CD4-positive, alpha-beta T cell (primary cell): ENCODE measurements at regions of chr5 and their contacts with region 1.

Region 1: GRCh38 chr5:119340597-119341218 is 15.1 kb upstream of the TNFAIP8 start:
- DNase-seq: peak in 12 of 14 experiments; percentile 44 to 91 (median 62)
- ATAC-seq: peak; percentile 55
- H3K4me3 ChIP-seq: peak overlapping the region; percentile 49
- H3K4me3 Mint-ChIP-seq: peak overlapping the region; percentile 81
- H3K27ac ChIP-seq: peak overlapping the region; percentile 77 to 83
- H3K27ac Mint-ChIP-seq: peak overlapping the region; percentile 97
- H3K4me1 ChIP-seq: peaks cover 93% of the 10 kb centered on the region
- H3K4me1 Mint-ChIP-seq: peaks cover 97% of the 10 kb centered on the region
- H3K27me3 ChIP-seq: no peaks in the 10 kb centered on the region
- H3K27me3 Mint-ChIP-seq: no peaks in the 10 kb centered on the region
- CTCF ChIP-seq: no peak

Region 2: DNA sequence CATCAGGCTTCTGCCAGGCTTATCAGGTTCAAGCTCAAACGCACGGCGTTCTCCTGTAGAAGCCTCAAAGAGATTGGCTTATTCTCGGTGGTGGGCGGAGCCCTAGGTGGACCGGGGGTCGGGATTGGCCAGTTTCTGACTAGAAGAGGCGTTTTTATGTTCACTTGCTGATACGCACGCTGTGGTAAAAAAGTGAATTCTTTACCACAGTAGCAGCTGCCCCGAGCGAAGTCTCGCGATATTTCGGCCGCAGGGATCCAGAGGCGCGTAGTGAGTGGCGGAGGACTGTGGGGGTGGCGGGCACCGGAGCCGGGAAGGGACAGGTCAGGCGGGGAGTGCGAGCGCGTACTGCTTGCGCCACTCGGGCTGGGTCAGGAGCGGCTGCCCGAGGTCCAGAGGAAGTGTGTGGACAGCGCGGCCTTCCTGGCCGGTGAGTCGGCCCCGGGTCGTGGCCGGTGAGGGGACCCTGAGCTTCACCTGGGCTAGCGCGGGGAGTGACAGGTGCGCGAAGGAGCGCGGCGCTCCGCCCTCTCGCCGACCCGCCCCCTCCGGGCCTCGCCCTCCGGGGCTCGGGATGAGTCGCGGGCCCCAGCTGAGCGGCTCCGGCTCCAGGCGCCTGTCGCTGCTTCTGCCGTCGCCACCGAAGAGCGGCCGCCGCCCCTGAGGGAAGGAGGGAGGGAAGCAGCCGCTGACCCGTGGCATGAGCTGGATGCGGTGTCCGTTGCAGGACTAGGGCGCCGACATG is 269.7 kb before region 1 on chr5 and contains the start of gene DMXL1:
- CTCF ChIA-PET with region 1: interaction called, 4 read pairs
- POLR2A ChIA-PET with region 1: interaction called, 8 read pairs
- intact Hi-C with region 1: loop called in 1 of 2 experiments (anchors 2 kb)
- DNase-seq: peak; percentile 96 to 99 (median 98)
- ATAC-seq: peak; percentile 82
- H3K4me3 ChIP-seq: peak within 1 kb of the TSS; percentile 81
- H3K4me3 Mint-ChIP-seq: peak within 1 kb of the TSS; percentile 100
- H3K27ac ChIP-seq: peak within 1 kb of the TSS; percentile 90 to 94
- H3K27ac Mint-ChIP-seq: peak within 1 kb of the TSS; percentile 98
- H3K4me1 ChIP-seq: peaks cover 19% of the 10 kb centered on the region
- H3K4me1 Mint-ChIP-seq: peaks cover 46% of the 10 kb centered on the region
- H3K27me3 ChIP-seq: no peaks in the 10 kb centered on the region
- H3K27me3 Mint-ChIP-seq: no peaks in the 10 kb centered on the region
- CTCF ChIP-seq: no peak
- total RNA-seq, gene DMXL1: 28.4 to 29.1 TPM

Region 3: GRCh38 chr5:119290161-119290569 is 50.5 kb before region 1 on chr5:
- CTCF ChIA-PET with region 1: interaction called, 8 read pairs
- POLR2A ChIA-PET with region 1: interaction called, 8 read pairs
- intact Hi-C with region 1: loop called in 1 of 2 experiments (anchors 2 kb)
- DNase-seq: peak in 4 of 14 experiments; percentile 23 to 69 (median 66)
- ATAC-seq: peak; percentile 28
- H3K4me3 ChIP-seq: peak overlapping the region; percentile 28
- H3K4me3 Mint-ChIP-seq: peak overlapping the region; percentile 76
- H3K27ac ChIP-seq: peak overlapping the region; percentile 68 to 89
- H3K27ac Mint-ChIP-seq: peak overlapping the region; percentile 97
- H3K4me1 ChIP-seq: peaks cover 42% of the 10 kb centered on the region
- H3K4me1 Mint-ChIP-seq: peaks cover 83% of the 10 kb centered on the region
- H3K27me3 ChIP-seq: no peaks in the 10 kb centered on the region
- H3K27me3 Mint-ChIP-seq: no peaks in the 10 kb centered on the region
- CTCF ChIP-seq: no peak

Region 4: DNA sequence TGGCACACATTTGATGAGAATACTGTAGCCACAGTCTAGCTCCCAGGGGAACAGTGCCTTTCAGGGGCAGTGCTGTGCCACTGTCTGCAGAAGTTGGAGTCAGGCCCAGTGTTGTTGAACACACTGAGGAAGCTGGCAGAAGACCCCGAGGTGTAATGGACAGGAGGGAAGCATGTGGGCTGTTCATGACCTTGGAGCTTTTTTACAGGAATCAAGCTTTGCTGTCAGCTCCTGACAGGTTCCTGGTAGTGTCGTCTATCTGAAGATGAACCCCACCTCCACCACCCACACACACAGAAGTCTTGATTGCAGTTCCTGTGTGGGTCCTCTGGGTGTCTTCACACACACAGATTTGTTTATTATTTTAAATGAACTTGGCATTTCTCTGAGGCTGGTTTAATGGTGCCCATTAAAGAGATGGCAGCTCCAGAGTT is 25.2 kb before region 1 on chr5:
- CTCF ChIA-PET with region 1: interaction called, 25 read pairs
- POLR2A ChIA-PET with region 1: interaction called, 31 read pairs
- intact Hi-C with region 1: no loop called
- DNase-seq: peak in 10 of 14 experiments; percentile 42 to 85 (median 54)
- ATAC-seq: peak; percentile 87
- H3K4me3 ChIP-seq: no peak overlapping the region
- H3K4me3 Mint-ChIP-seq: peak overlapping the region; percentile 59
- H3K27ac ChIP-seq: peak overlapping the region; percentile 43 to 61
- H3K27ac Mint-ChIP-seq: peak overlapping the region; percentile 95
- H3K4me1 ChIP-seq: peaks cover 80% of the 10 kb centered on the region
- H3K4me1 Mint-ChIP-seq: peaks cover 92% of the 10 kb centered on the region
- H3K27me3 ChIP-seq: no peaks in the 10 kb centered on the region
- H3K27me3 Mint-ChIP-seq: no peaks in the 10 kb centered on the region
- CTCF ChIP-seq: peak; percentile 65

Region 5: GRCh38 chr5:119355685-119356611 is 15.2 kb after region 1 on chr5 and contains the start of gene TNFAIP8:
- CTCF ChIA-PET with region 1: interaction called, 36 read pairs
- POLR2A ChIA-PET with region 1: interaction called, 301 read pairs
- intact Hi-C with region 1: loop called in 1 of 2 experiments (anchors 2 kb)
- DNase-seq: peak in 6 of 14 experiments; percentile 28 to 81 (median 58)
- ATAC-seq: peak; percentile 37
- H3K4me3 ChIP-seq: peak within 1 kb of the TSS; percentile 61
- H3K4me3 Mint-ChIP-seq: peak within 1 kb of the TSS; percentile 93
- H3K27ac ChIP-seq: peak within 1 kb of the TSS; percentile 63 to 76
- H3K27ac Mint-ChIP-seq: peak within 1 kb of the TSS; percentile 86
- H3K4me1 ChIP-seq: peaks cover 89% of the 10 kb centered on the region
- H3K4me1 Mint-ChIP-seq: peaks cover 97% of the 10 kb centered on the region
- H3K27me3 ChIP-seq: no peaks in the 10 kb centered on the region
- H3K27me3 Mint-ChIP-seq: no peaks in the 10 kb centered on the region
- CTCF ChIP-seq: no peak
- total RNA-seq, gene TNFAIP8: 106 to 114 TPM

Region 6: GRCh38 chr5:119411935-119412602 is 71.4 kb after region 1 on chr5:
- CTCF ChIA-PET with region 1: interaction called, 32 read pairs
- POLR2A ChIA-PET with region 1: interaction called, 9 read pairs
- intact Hi-C with region 1: no loop called
- DNase-seq: peak in 13 of 14 experiments; percentile 11 to 87 (median 43)
- ATAC-seq: peak; percentile 94
- H3K4me3 ChIP-seq: peak overlapping the region; percentile 62
- H3K4me3 Mint-ChIP-seq: peak overlapping the region; percentile 85
- H3K27ac ChIP-seq: no peak overlapping the region
- H3K27ac Mint-ChIP-seq: peak overlapping the region; percentile 31
- H3K4me1 ChIP-seq: peaks cover 8% of the 10 kb centered on the region
- H3K4me1 Mint-ChIP-seq: peaks cover 20% of the 10 kb centered on the region
- H3K27me3 ChIP-seq: no peaks in the 10 kb centered on the region
- H3K27me3 Mint-ChIP-seq: no peaks in the 10 kb centered on the region
- CTCF ChIP-seq: peak; percentile 92